Activated CD4-positive, alpha-beta T cell treated with anti-CD3 and anti-CD28 coated beads, Interleukin-2, amount 10 ng/mL, durations not matched to agents 24 days and 14 days (primary cell): ENCODE measurements at regions of chr12 and their contacts with region 1.

Region 1: GRCh38 chr12:124992874-124993625 is 395 bp upstream of the BRI3BP start:
- DNase-seq: peak; percentile 95
- H3K4me3 Mint-ChIP-seq: peak overlapping the region; percentile 84
- H3K27ac Mint-ChIP-seq: peak overlapping the region; percentile 86
- H3K4me1 Mint-ChIP-seq: peaks cover 27% of the 10 kb centered on the region
- H3K27me3 Mint-ChIP-seq: no peaks in the 10 kb centered on the region

Region 2: GRCh38 chr12:124917135-124917840 is 75.8 kb before region 1 on chr12:
- intact Hi-C with region 1: loop called (anchors 2 kb)
- DNase-seq: peak; percentile 97
- H3K4me3 Mint-ChIP-seq: peak overlapping the region; percentile 99
- H3K27ac Mint-ChIP-seq: peak overlapping the region; percentile 100
- H3K4me1 Mint-ChIP-seq: peaks cover 75% of the 10 kb centered on the region
- H3K27me3 Mint-ChIP-seq: peaks cover 2% of the 10 kb centered on the region

Region 3: GRCh38 chr12:124940549-124941527 is 52.2 kb before region 1 on chr12:
- intact Hi-C with region 1: loop called (anchors 1 kb)
- DNase-seq: peak; percentile 95
- H3K4me3 Mint-ChIP-seq: no peak overlapping the region
- H3K27ac Mint-ChIP-seq: no peak overlapping the region
- H3K4me1 Mint-ChIP-seq: peaks cover 17% of the 10 kb centered on the region
- H3K27me3 Mint-ChIP-seq: no peaks in the 10 kb centered on the region

Region 4: DNA sequence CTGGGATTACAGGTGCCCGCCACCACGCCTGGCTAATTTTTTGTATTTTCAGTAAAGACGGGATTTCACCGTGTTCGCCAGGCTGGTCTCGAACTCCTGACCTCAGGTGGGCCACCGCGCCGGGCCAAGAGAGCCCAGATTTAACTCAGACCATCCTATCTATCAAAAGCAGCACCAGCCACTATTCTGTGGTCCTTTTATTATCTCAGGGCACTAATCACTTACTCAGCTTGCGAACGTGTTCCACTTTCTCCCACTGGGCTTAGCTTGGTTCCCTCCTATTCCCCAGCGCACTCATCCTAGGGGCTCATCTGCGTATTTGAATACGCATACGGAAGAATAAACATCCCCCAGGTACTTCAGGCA is 56.0 kb after region 1 on chr12:
- intact Hi-C with region 1: loop called (anchors 1 kb)
- DNase-seq: no peak
- H3K4me3 Mint-ChIP-seq: peak overlapping the region; percentile 89
- H3K27ac Mint-ChIP-seq: peak overlapping the region; percentile 66
- H3K4me1 Mint-ChIP-seq: peaks cover 4% of the 10 kb centered on the region
- H3K27me3 Mint-ChIP-seq: no peaks in the 10 kb centered on the region

Region 5: DNA sequence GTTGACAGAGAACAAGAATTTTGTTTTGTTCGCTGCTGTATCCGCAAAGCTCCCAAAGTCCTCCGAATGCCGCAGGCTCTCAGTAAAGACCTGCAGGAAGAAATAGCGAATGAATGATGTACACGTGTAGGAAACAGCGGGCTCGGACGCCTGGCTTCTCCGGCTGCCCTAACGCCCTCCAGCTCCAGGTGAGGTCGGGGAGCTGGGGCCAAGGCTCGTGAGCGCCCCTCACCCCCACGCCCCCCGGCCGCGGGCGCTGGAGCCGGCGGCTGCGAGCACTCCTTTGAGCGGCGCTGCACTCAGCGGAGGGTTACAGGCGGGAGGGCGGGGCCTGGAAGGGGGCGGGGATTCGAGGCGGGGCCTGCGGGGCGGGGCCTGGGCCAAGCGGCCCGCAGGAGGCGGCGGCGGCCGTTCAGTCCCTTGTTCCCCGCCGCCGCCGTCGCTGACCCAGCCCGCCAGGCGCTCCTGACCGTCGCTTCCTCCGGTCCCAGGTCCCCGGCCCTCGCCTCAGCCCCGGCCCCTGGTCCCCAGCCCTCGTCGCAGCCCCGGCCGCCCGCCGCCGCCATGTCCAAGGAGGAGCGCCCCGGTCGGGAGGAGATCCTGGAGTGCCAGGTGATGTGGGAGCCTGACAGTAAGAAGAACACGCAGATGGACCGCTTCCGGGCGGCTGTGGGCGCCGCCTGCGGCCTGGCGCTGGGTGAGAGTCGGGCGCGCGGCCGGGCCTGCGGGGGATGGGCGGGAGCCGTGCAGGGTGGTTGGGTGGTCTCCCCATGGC is 72.2 kb after region 1 on chr12 and contains the start of gene AACS:
- intact Hi-C with region 1: loop called (anchors 1 kb)
- DNase-seq: peak; percentile 89
- H3K4me3 Mint-ChIP-seq: peak within 1 kb of the TSS; percentile 82
- H3K27ac Mint-ChIP-seq: peak within 1 kb of the TSS; percentile 53
- H3K4me1 Mint-ChIP-seq: peaks cover 14% of the 10 kb centered on the region
- H3K27me3 Mint-ChIP-seq: peaks cover 17% of the 10 kb centered on the region
- total RNA-seq, gene AACS: 24.7 and 26.7 TPM in 2 replicates